ENCODE measurements at regions of chr2 and their contacts with region 1.

Region 1: DNA sequence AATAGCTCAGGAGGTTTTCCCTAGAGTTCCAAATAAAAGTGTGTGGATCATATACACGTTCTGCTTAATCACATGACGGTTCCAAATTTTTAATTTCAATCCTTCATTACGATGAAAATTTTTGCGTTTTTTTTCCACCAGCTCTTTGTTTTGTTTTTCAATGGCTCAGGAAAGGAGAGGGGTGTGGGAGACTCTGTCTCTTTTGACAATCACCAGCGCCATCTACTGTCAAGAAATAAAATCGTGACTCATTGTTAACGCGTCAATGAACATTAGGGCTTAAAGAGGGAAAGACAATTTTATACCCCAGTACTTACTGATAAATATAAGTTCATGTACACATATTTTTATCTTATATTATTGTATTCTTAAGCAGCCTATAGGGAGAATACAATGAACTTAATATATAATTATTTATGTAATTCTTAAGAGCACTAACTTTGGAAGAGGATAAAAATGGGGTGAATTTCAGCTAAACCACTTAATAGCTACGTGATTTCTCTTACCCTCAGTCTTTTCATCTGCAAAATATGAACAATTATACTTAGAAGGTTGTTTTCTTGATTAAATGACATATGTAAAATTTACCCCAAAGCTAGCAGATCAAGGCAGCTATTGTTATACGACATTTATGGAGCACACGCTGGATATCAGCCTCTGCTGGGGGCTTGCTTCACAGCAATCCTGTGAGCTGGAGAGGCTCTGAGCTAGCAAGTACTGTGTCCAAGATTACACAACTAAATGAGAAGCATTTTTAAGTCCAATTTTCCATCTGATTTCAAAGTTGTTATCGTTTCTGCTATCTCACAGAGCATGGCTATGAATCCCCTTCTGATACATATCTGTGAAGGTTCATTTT is 47.4 kb upstream of the RMDN2 start:
- DNase-seq: no peak
- H3K4me3 Mint-ChIP-seq: no peak overlapping the region
- H3K27ac Mint-ChIP-seq: no peak overlapping the region
- H3K4me1 Mint-ChIP-seq: peaks cover 27% of the 10 kb centered on the region
- H3K27me3 Mint-ChIP-seq: peaks cover 27% of the 10 kb centered on the region

Region 2: GRCh38 chr2:37168217-37168981 is 709.3 kb before region 1 on chr2:
- intact Hi-C with region 1: loop called (anchors 1 kb)
- DNase-seq: no peak
- H3K4me3 Mint-ChIP-seq: no peak overlapping the region
- H3K27ac Mint-ChIP-seq: no peak overlapping the region
- H3K4me1 Mint-ChIP-seq: no peaks in the 10 kb centered on the region
- H3K27me3 Mint-ChIP-seq: peaks cover 4% of the 10 kb centered on the region

Region 3: GRCh38 chr2:37287966-37288365 is 589.7 kb before region 1 on chr2:
- intact Hi-C with region 1: loop called (anchors 5 kb)
- DNase-seq: no peak
- H3K4me3 Mint-ChIP-seq: no peak overlapping the region
- H3K27ac Mint-ChIP-seq: no peak overlapping the region
- H3K4me1 Mint-ChIP-seq: no peaks in the 10 kb centered on the region
- H3K27me3 Mint-ChIP-seq: no peaks in the 10 kb centered on the region

Region 4: DNA sequence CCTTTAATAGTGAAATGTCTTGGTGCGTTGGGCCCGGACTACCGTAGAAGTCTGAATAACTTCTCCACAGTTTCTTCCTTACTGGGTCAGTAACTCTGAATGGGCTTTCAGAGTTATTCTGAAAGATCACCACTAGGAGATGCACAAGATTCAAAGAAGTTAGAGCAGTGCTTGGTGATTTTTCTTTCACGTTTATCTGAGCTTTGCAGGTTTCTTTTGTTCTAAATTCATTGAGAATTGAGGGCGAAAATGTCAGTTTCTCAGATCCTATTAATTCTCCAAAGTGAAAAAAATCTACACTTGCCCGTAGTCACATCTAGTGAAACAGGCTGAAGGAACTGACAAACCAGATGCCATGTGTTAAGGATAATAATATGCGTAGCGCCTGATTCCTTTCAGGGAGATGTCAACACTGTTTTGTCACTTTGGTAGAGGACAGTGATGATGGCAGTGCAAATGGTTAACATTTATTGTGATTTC is 463.2 kb before region 1 on chr2:
- intact Hi-C with region 1: loop called (anchors 1 kb)
- DNase-seq: no peak
- H3K4me3 Mint-ChIP-seq: no peak overlapping the region
- H3K27ac Mint-ChIP-seq: no peak overlapping the region
- H3K4me1 Mint-ChIP-seq: no peaks in the 10 kb centered on the region
- H3K27me3 Mint-ChIP-seq: peaks cover 18% of the 10 kb centered on the region

Region 5: GRCh38 chr2:37537316-37537715 is 340.4 kb before region 1 on chr2:
- intact Hi-C with region 1: loop called (anchors 5 kb)
- DNase-seq: no peak
- H3K4me3 Mint-ChIP-seq: no peak overlapping the region
- H3K27ac Mint-ChIP-seq: no peak overlapping the region
- H3K4me1 Mint-ChIP-seq: no peaks in the 10 kb centered on the region
- H3K27me3 Mint-ChIP-seq: peaks cover 15% of the 10 kb centered on the region

Region 6: DNA sequence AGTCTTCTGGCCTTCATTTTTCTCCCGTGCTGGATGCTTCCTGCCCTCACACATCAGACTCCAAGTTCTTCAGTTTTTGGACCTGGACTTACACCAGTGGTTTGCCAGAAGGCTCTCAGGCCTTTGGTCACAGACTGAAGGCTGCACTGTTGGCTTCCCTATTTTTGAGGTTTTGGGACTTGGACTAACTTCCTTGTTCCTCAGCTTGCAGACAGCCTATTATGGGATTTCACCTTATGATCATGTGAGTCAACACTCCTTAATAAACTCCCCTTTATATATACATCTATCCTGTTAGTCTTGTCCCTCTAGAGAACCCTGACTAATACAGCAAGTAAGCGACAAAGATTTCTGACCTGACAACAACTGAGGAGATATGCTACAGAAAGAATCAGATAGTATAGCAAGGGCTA is 213.4 kb before region 1 on chr2:
- intact Hi-C with region 1: no loop called
- DNase-seq: no peak
- H3K4me3 Mint-ChIP-seq: no peak overlapping the region
- H3K27ac Mint-ChIP-seq: no peak overlapping the region
- H3K4me1 Mint-ChIP-seq: peaks cover 31% of the 10 kb centered on the region
- H3K27me3 Mint-ChIP-seq: no peaks in the 10 kb centered on the region

Region 7: DNA sequence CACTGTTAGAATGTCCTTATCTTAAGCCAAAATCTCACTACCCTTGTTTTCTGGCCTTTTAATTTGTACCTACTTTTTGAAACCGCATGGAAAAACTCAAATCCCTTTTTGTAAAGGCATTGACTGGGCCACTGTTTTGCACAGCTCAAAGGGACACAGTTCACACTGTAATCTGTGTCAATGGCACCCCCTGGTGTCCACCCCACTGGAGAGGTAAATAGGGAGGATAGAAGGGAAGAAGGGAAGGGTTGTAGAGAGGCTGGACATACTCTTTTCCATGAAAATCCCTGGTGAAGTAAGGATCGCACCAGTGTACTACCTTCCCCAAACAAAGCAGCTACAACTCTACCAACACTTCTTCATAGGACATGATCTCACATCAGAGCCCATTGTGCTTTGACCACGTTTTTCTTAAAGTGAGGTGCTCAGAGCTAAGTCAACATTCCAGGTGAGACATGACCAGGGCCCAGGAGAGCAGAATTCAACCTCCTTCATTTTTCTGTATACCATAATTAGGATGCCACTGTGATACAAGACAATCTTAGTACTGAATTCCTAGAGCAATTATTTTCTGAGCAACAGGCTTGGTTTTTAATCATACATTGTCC is 45.0 kb before region 1 on chr2:
- intact Hi-C with region 1: loop called (anchors 1 kb)
- DNase-seq: peak; percentile 60
- H3K4me3 Mint-ChIP-seq: no peak overlapping the region
- H3K27ac Mint-ChIP-seq: no peak overlapping the region
- H3K4me1 Mint-ChIP-seq: peaks cover 14% of the 10 kb centered on the region
- H3K27me3 Mint-ChIP-seq: no peaks in the 10 kb centered on the region

Measured in activated T-helper 1 cell treated with anti-CD3 and anti-CD28 coated beads, Interleukin-12 subunit alpha, Interleukin-12 subunit beta, Interleukin-2, Interleukin-4 antibody, amounts not matched to agents 30 ng/mL and 10 ng/mL and 1 ng/mL, durations not matched to agents 14 hours and 24 hours and 36 hours (primary cell).